HepG2 (cell line): ENCODE measurements at regions of chr6 and their contacts with region 1.

Region 1: GRCh38 chr6:136846046-136846445 is 23.7 kb downstream of the PEX7 start:
- DNase-seq: peak; percentile 57
- ATAC-seq: peak; percentile 55; the same call in 2 of the 3 replicates
- H3K4me3 ChIP-seq: no peak overlapping the region
- H3K27ac ChIP-seq: no peak overlapping the region
- H3K4me1 ChIP-seq: no peaks in the 10 kb centered on the region
- H3K27me3 ChIP-seq: no peaks in the 10 kb centered on the region
- CTCF ChIP-seq: peak; percentile 66
- EP300 ChIP-seq: no peak
- POLR2A ChIP-seq: no peak
- RAD21 ChIP-seq: no peak

Region 2: GRCh38 chr6:136927292-136927691 is 81.2 kb after region 1 on chr6:
- CTCF ChIA-PET with region 1: no interaction called
- POLR2A ChIA-PET with region 1: no interaction called
- in situ Hi-C with region 1: no loop called
- intact Hi-C with region 1: loop called (anchors 1 kb)
- DNase-seq: peak; percentile 10
- ATAC-seq: peak; percentile 79
- H3K4me3 ChIP-seq: no peak overlapping the region
- H3K27ac ChIP-seq: no peak overlapping the region
- H3K4me1 ChIP-seq: no peaks in the 10 kb centered on the region
- H3K27me3 ChIP-seq: peaks cover 3 to 29% of the 10 kb centered on the region in 2 experiments; a peak in 4 of 5 replicates
- CTCF ChIP-seq: peak; percentile 62
- EP300 ChIP-seq: no peak
- POLR2A ChIP-seq: no peak
- RAD21 ChIP-seq: 0 out of 2 replicates have a peak, but pooled peaks have one; percentile 30

Region 3: DNA sequence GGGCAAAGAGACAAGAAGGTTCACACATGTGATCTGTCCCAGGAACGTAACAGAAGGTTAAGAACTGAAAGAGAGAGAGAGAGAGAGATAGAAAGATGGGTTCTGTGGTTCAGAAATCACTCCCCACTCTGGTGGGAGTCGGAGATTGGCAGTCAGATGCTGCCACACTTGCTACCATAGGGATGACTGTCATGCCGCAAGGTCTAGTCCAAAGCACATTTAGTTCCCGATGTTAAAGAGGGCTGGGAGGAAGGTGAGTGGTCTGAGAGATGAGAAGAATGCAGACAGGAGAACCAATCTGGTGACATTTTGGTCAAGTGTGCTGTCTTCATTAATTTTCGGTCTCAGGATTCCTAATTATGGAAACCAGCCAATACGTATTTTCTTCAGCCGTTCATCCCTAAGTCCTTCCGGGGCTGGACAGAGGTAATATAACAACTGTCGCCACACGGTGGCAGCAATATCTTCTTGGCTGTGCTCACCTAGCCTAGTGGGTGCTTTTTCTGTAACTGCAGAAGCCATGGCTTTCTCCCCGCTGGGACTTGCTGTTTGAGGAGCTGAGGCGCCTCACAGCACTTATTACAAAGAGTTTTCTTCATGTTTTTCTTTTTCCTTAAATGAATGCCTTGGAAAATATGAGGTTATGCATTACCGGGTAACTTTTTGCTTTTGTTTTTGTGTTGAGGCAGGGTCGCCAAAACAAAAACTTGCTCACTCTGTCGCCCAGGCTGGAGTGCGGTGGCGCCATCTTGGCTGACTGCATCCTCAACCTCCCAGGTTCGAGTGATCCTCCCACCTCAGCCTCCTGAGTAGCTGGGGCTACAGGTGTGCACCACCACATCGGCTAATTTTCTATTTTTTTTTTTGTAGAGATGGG is 122.1 kb after region 1 on chr6:
- CTCF ChIA-PET with region 1: no interaction called
- POLR2A ChIA-PET with region 1: no interaction called
- in situ Hi-C with region 1: no loop called
- intact Hi-C with region 1: loop called (anchors 5 kb)
- DNase-seq: peak; percentile 69
- ATAC-seq: peak; percentile 99
- H3K4me3 ChIP-seq: no peak overlapping the region
- H3K27ac ChIP-seq: no peak overlapping the region
- H3K4me1 ChIP-seq: no peaks in the 10 kb centered on the region
- H3K27me3 ChIP-seq: peaks cover 0 to 7% of the 10 kb centered on the region in 2 experiments; a peak in 1 of 5 replicates
- CTCF ChIP-seq: peak; percentile 83
- EP300 ChIP-seq: no peak
- POLR2A ChIP-seq: no peak
- RAD21 ChIP-seq: peak; percentile 62

Region 4: DNA sequence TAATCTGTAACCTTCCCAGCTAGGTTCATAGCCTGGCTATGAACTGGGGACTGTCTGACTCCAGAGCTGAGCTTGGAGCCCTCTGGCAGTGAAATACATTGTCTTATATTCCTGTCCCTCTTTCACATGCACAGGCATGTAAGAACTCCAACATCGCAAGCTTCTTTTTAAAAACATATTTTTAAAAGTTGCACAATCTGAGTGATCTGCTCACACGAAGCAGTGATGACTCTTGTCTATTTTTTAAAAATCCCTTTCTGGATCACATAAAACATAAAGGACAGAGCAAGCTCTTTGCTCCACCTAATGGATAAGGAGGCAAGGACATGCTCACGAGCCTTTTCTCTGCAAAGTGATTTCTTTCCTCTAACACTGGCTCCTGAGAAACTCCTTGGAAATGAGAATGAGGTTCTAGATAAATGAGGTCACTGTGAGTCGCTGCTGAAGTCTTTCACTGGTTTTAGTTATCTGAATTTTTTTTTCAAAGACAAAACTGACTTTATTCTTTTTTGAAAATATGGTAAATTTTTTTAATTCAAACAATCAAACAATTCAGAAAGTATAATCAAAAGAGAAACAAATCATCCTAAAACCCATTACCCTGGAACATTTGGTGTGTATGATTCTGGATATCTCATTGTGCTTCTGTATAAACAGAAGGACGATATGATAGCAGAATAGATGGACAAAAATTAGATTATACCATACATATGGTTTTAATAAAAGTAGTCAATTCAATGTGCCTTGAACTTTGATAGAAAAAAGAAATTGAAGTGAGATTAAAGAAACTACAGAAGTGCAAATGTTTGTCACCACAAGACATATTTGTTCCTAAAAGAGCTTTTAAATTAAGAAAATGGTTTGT is 167.9 kb after region 1 on chr6:
- CTCF ChIA-PET with region 1: no interaction called
- POLR2A ChIA-PET with region 1: no interaction called
- in situ Hi-C with region 1: no loop called
- intact Hi-C with region 1: loop called (anchors 5 kb)
- DNase-seq: peak; percentile 18
- ATAC-seq: peak; percentile 76
- H3K4me3 ChIP-seq: no peak overlapping the region
- H3K27ac ChIP-seq: no peak overlapping the region
- H3K4me1 ChIP-seq: no peaks in the 10 kb centered on the region
- H3K27me3 ChIP-seq: peaks cover 0 to 5% of the 10 kb centered on the region in 2 experiments; a peak in 1 of 5 replicates
- CTCF ChIP-seq: peak; percentile 46
- EP300 ChIP-seq: no peak
- POLR2A ChIP-seq: no peak
- RAD21 ChIP-seq: 0 out of 2 replicates have a peak, but pooled peaks have one; percentile 22